ENCODE measurements at regions of chr1 and their contacts with region 1.

Region 1: DNA sequence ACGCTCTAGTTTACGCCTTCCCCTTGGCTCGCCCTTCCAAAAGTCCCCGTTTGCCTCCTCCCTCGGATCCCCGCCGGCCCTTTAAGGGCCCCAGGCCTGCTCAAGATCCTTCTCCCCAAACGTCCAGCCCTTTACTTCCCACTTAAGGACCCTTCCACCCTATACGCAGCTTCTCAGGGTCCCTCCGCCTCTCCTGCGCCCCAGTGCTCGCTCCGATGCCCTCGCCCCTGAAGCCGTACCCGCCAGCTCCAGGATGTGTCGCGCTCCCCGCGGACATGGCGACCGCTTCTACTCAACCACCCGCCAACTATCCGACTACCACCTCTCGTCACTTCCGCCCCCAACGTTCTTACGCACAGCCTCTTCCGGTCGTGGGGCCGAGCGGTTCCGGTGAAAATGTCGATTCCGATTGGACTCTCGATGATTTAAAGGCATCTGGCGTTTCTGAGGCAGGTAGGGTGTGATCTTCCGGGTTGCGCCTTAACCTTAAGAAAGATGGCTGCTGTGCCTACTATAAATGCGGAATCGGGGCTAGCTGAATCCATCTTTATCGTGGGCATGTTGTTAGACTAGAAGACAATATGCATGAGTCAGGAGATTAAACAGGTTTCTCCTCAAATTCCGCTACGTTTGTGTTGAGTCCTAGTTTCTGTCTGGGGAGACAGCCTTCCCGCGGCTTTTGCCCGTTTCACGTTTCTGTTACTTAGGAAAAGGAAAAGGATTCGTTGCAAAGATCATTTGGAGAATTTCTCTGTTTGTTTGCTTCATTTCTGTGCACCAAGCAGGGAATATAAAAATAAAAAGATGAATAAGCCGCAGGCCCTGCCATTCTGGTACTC is at the start of gene KHDC4:
- DNase-seq: peak; percentile 93 to 98 (median 97)
- H3K4me3 ChIP-seq: peak within 1 kb of the TSS; percentile 71 to 86
- H3K4me3 Mint-ChIP-seq: no peak within 1 kb of the TSS
- H3K27ac ChIP-seq: peak within 1 kb of the TSS; percentile 95
- H3K27ac Mint-ChIP-seq: peak within 1 kb of the TSS in 1 of 7 donors; percentile 73
- H3K4me1 ChIP-seq: peaks cover 50% of the 10 kb centered on the region
- H3K4me1 Mint-ChIP-seq: peaks cover 10 to 24% (median 16%) of the 10 kb centered on the region in 4 donors
- H3K27me3 ChIP-seq: no peaks in the 10 kb centered on the region
- H3K27me3 Mint-ChIP-seq: no peaks in the 10 kb centered on the region
- total RNA-seq, gene KHDC4: 127 to 134 TPM

Region 2: DNA sequence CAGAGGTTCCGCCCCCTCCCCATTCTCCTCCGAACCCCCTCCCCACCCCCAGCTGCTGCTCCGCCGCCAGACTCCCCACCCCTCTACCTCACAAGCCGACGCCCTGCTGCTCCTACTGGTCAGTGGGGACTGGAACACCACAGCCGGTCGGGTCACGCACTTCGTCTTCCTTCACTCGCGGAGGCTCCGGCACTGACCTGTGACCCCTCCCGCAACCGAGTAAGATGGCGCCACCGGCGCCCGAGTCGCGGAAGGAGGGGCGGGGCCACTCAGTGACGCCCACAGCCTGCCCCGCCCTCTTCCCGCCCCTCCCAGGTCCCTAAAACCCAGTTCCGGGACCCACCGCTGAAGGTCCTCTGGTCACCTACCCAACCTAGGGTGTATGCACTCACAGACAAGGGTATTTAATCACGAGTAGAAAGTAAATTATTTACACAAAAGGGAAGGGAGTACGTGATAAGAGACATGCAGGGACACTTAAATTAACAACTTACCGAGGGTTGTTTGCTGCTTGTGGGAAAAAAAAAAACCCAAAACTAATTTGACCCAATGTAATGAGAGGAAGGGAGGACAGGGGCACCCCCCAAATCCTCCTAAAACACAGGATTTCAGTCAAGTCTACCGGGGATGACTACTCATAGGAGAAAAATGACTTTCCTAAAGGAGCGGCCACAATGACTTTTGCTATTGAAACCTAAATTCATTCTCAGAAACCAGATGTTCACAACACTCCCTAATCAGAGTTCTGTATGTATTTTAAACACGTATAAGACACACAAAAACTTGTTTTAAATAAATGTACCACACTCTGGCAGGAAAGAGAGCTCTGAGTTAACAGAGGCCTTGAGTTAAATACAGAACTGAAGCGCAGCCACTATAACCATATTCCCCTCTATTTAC is 22.9 kb before region 1 on chr1 and contains the start of gene RIT1:
- CTCF ChIA-PET with region 1: interaction called, 3 read pairs
- POLR2A ChIA-PET with region 1: interaction called, 11 read pairs
- intact Hi-C with region 1: loop called (anchors 1 kb)
- DNase-seq: peak; percentile 78 to 87 (median 80)
- H3K4me3 ChIP-seq: peak within 1 kb of the TSS; percentile 85 to 86
- H3K4me3 Mint-ChIP-seq: peak within 1 kb of the TSS; percentile 92 to 99 (median 98)
- H3K27ac ChIP-seq: peak within 1 kb of the TSS; percentile 79
- H3K27ac Mint-ChIP-seq: peak within 1 kb of the TSS; percentile 86 to 99 (median 98)
- H3K4me1 ChIP-seq: peaks cover 21% of the 10 kb centered on the region
- H3K4me1 Mint-ChIP-seq: peaks cover 16 to 28% (median 21%) of the 10 kb centered on the region in 4 donors
- H3K27me3 ChIP-seq: no peaks in the 10 kb centered on the region
- H3K27me3 Mint-ChIP-seq: no peaks in the 10 kb centered on the region
- total RNA-seq, gene RIT1: 45.0 to 48.0 TPM

Region 3: DNA sequence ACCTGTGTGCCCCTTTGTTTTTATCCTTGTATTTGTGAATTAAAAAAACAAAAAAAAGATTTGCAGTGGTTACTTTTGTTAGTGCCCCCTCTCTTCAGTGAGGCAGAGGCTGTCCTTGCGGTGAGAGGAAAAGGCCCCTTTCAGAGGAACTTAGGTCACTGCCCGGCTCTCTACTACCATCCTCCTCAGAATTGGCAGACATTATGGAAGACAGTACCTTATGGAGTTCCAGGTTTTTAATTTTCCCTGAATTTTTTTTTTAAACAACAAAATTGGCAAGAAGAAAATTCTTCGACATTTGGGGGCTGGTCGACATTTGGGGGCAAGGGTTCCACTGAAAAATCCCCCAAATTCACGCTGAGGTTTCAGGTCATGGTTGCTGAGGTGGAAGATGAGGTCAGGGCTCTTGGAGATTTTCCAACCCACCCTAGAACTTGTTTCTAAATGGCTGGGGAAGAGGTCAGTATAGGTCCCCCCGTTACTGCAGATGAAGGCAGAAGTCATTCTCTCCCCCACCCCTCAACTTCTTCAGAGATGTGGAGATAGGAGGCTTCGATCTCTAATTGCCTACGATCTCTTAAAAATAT is 12.4 kb after region 1 on chr1:
- CTCF ChIA-PET with region 1: interaction called, 3 read pairs
- POLR2A ChIA-PET with region 1: interaction called, 41 read pairs
- intact Hi-C with region 1: no loop called
- DNase-seq: no peak
- H3K4me3 ChIP-seq: no peak overlapping the region
- H3K4me3 Mint-ChIP-seq: peak overlapping the region in 6 of 8 donors; percentile 36 to 82 (median 54)
- H3K27ac ChIP-seq: peak overlapping the region; percentile 48
- H3K27ac Mint-ChIP-seq: peak overlapping the region; percentile 84 to 95 (median 91)
- H3K4me1 ChIP-seq: peaks cover 36% of the 10 kb centered on the region
- H3K4me1 Mint-ChIP-seq: peaks cover 15 to 45% (median 33%) of the 10 kb centered on the region in 4 donors
- H3K27me3 ChIP-seq: no peaks in the 10 kb centered on the region
- H3K27me3 Mint-ChIP-seq: no peaks in the 10 kb centered on the region

Region 4: DNA sequence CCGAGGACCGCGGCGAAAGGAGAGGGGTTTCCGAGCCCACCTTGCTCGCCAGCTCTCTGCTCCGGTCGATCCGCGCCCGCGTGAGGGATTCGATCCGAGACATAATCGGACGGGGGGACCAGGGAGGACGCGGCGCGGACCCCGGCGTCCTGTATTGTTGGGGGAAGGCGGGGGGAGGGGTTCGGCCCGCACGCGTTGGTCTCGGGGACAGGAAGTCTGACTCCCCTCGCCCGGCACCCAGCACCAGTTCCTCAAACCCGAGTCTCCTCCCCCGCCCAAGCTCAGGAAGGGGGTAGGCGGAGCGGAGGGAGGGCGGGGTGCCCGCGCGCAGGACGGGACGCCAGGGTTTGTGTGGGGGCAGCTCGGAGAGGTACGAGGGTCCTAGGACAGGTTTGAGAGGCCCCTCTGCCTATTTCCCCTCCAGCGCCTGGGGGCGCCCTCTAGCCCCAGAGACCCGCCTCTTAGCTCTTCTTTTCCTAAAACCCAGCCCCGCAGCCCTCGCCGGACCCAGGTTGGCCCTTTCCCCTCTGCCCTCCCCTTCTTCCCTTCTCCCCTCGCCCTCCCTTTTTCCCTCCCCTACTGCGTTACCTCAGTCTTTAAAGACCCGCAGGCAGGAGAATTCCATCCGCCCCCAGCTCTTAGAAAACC is 44.1 kb after region 1 on chr1 and contains the start of gene ARHGEF2:
- CTCF ChIA-PET with region 1: interaction called, 45 read pairs
- POLR2A ChIA-PET with region 1: interaction called, 179 read pairs
- intact Hi-C with region 1: loop called (anchors 2 kb)
- DNase-seq: peak; percentile 63 to 82 (median 66)
- H3K4me3 ChIP-seq: peak within 1 kb of the TSS; percentile 87 to 96
- H3K4me3 Mint-ChIP-seq: peak within 1 kb of the TSS; percentile 93 to 99 (median 97)
- H3K27ac ChIP-seq: peak within 1 kb of the TSS; percentile 86
- H3K27ac Mint-ChIP-seq: peak within 1 kb of the TSS; percentile 81 to 98 (median 96)
- H3K4me1 ChIP-seq: peaks cover 73% of the 10 kb centered on the region
- H3K4me1 Mint-ChIP-seq: peaks cover 49 to 89% (median 62%) of the 10 kb centered on the region in 4 donors
- H3K27me3 ChIP-seq: no peaks in the 10 kb centered on the region
- H3K27me3 Mint-ChIP-seq: no peaks in the 10 kb centered on the region
- total RNA-seq, gene ARHGEF2: 190 to 198 TPM

Region 5: GRCh38 chr1:155996166-155996565 is 61.9 kb after region 1 on chr1:
- CTCF ChIA-PET with region 1: interaction called, 67 read pairs
- POLR2A ChIA-PET with region 1: interaction called, 4 read pairs
- intact Hi-C with region 1: no loop called
- DNase-seq: no peak
- H3K4me3 ChIP-seq: no peak overlapping the region
- H3K4me3 Mint-ChIP-seq: no peak overlapping the region
- H3K27ac ChIP-seq: no peak overlapping the region
- H3K27ac Mint-ChIP-seq: peak overlapping the region in 1 of 7 donors; percentile 64
- H3K4me1 ChIP-seq: no peaks in the 10 kb centered on the region
- H3K4me1 Mint-ChIP-seq: peaks cover 0 to 4% (median under 1%) of the 10 kb centered on the region in 4 donors
- H3K27me3 ChIP-seq: no peaks in the 10 kb centered on the region
- H3K27me3 Mint-ChIP-seq: no peaks in the 10 kb centered on the region

Region 6: DNA sequence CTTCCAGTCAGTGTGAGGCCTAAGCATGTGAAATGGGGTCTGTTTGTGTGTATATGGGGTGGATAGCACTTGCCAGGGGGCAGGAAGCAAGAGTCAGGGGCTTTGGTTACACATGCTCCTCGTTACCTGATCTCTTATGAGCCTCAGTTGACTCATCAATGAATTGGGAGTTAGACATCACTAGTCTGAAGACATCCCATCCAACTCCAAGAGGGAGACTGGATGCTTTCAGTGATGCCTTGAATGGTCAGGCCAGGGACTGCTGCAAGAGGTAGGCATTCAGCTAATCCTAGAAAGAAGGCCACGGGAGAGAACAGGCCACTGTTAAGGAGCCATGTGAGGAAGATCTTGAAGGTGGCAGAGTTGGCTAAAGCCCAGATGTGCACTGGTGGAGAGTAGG is 132.9 kb after region 1 on chr1:
- CTCF ChIA-PET with region 1: interaction called, 11 read pairs
- POLR2A ChIA-PET with region 1: interaction called, 3 read pairs
- intact Hi-C with region 1: no loop called
- DNase-seq: no peak
- H3K4me3 ChIP-seq: no peak overlapping the region
- H3K4me3 Mint-ChIP-seq: no peak overlapping the region
- H3K27ac ChIP-seq: no peak overlapping the region
- H3K27ac Mint-ChIP-seq: peak overlapping the region in 1 of 7 donors; percentile 23
- H3K4me1 ChIP-seq: no peaks in the 10 kb centered on the region
- H3K4me1 Mint-ChIP-seq: peaks cover 3 to 10% (median 4%) of the 10 kb centered on the region in 4 donors
- H3K27me3 ChIP-seq: no peaks in the 10 kb centered on the region
- H3K27me3 Mint-ChIP-seq: no peaks in the 10 kb centered on the region

Measured in CD4-positive, alpha-beta memory T cell (primary cell).